Naive thymus-derived CD4-positive, alpha-beta T cell (primary cell): ENCODE measurements at regions of chr5 and their contacts with region 1.

Region 1: GRCh38 chr5:132064738-132065331 is 4.4 kb downstream of the IL3 start:
- DNase-seq: peak; percentile 40 to 82 (median 64)
- ATAC-seq: peak; percentile 80
- H3K4me3 ChIP-seq: no peak overlapping the region
- H3K4me3 Mint-ChIP-seq: no peak overlapping the region
- H3K27ac ChIP-seq: no peak overlapping the region
- H3K27ac Mint-ChIP-seq: peak overlapping the region in 2 of 9 donors; percentile 30 to 79
- H3K4me1 ChIP-seq: peaks cover 0 to 9% of the 10 kb centered on the region in 2 donors
- H3K4me1 Mint-ChIP-seq: peaks cover 0 to 62% (median 5%) of the 10 kb centered on the region in 7 donors
- H3K27me3 ChIP-seq: no peaks in the 10 kb centered on the region
- H3K27me3 Mint-ChIP-seq: peaks cover 0 to 7% (median 0%) of the 10 kb centered on the region in 5 donors

Region 2: GRCh38 chr5:131589510-131590348 is 475.1 kb before region 1 on chr5:
- CTCF ChIA-PET with region 1: interaction called, 23 read pairs
- POLR2A ChIA-PET with region 1: interaction called, 3 read pairs
- intact Hi-C with region 1: loop called (anchors 1 kb)
- DNase-seq: peak in 8 of 9 donors; percentile 8 to 71 (median 62)
- ATAC-seq: peak; percentile 80
- H3K4me3 ChIP-seq: no peak overlapping the region
- H3K4me3 Mint-ChIP-seq: no peak overlapping the region
- H3K27ac ChIP-seq: peak overlapping the region; percentile 9
- H3K27ac Mint-ChIP-seq: peak overlapping the region; percentile 10 to 75 (median 52)
- H3K4me1 ChIP-seq: peaks cover 4 to 5% of the 10 kb centered on the region in 2 donors
- H3K4me1 Mint-ChIP-seq: peaks cover 21 to 63% (median 58%) of the 10 kb centered on the region in 7 donors
- H3K27me3 ChIP-seq: no peaks in the 10 kb centered on the region
- H3K27me3 Mint-ChIP-seq: no peaks in the 10 kb centered on the region

Region 3: DNA sequence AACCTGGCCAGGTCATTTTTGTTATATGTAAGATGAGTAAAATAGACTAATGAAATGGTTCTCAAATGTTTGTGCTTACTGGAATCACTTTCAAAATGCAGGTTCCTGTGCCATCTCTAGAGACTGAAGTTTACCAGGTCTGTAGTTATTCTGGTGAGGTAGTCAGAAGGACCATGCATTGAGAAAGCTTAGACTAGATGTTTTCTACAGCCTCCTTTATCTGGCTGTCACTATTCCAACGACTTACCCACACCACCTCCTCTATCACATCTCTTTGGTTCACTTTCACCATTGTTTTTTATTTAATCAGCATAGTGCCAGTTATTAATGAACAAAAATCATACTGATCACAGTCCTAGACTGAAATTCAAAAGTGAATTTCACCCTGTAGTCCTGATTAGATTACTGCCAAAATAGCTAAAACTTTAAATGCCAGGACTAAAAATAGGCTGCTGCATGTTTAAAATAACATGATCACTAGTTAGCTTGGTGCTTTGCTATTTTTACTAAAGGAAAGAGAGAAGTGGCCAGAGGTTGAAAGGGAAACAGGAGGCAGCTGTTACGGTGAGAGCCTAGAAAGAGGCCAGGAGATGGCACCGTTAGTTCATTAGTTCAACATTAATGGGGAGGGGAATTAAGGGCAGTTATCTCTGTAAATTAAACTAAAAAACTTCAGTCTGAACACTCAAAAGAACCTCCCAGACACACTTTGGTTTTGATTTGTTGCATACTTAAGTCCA is 254.2 kb before region 1 on chr5:
- CTCF ChIA-PET with region 1: interaction called, 3 read pairs
- POLR2A ChIA-PET with region 1: no interaction called
- intact Hi-C with region 1: loop called (anchors 1 kb)
- DNase-seq: peak in 4 of 9 donors; percentile 21 to 25 (median 22)
- ATAC-seq: peak; percentile 52
- H3K4me3 ChIP-seq: no peak overlapping the region
- H3K4me3 Mint-ChIP-seq: no peak overlapping the region
- H3K27ac ChIP-seq: no peak overlapping the region
- H3K27ac Mint-ChIP-seq: no peak overlapping the region
- H3K4me1 ChIP-seq: no peaks in the 10 kb centered on the region
- H3K4me1 Mint-ChIP-seq: peaks cover 0 to 4% (median 0%) of the 10 kb centered on the region in 7 donors
- H3K27me3 ChIP-seq: no peaks in the 10 kb centered on the region
- H3K27me3 Mint-ChIP-seq: peaks cover 0 to 24% (median 0%) of the 10 kb centered on the region in 5 donors

Region 4: DNA sequence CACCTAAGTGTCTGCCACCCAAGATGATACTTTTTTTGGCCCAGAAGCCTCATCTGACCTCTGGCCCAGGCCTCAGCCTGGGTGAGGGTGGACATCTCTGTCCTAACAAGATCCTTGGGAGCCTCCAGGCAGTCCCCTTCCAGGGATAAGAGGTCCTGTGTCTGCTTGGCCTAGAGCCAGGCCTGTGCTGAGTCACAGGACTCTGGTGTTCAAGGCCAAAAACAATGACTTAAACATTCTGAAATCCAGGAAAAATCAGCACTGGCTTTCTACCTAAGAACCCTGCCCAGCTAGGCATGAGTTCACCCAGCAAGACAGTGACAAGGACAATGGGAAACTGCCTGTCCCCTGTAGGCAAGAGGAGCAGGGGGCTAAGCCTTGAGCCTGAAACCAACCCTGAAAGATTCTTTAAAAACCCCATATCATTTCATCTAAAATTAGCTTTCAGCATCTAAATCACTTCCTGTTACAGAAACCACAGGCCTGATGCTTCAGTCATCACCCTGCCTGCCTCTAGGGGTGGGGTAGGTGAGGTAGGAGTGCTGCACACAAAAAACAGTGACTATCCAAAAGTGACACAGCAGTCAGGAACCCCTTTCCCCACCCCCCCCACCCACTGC is 38.6 kb after region 1 on chr5:
- CTCF ChIA-PET with region 1: interaction called, 6 read pairs
- POLR2A ChIA-PET with region 1: no interaction called
- intact Hi-C with region 1: loop called (anchors 1 kb)
- DNase-seq: peak in 8 of 9 donors; percentile 49 to 82 (median 72)
- ATAC-seq: peak; percentile 92
- H3K4me3 ChIP-seq: peak overlapping the region; percentile 0
- H3K4me3 Mint-ChIP-seq: peak overlapping the region in 9 of 10 donors; percentile 16 to 74 (median 56)
- H3K27ac ChIP-seq: no peak overlapping the region
- H3K27ac Mint-ChIP-seq: peak overlapping the region in 8 of 9 donors; percentile 14 to 86 (median 64)
- H3K4me1 ChIP-seq: peaks cover 40 to 72% of the 10 kb centered on the region in 2 donors
- H3K4me1 Mint-ChIP-seq: peaks cover 42 to 86% (median 51%) of the 10 kb centered on the region in 7 donors
- H3K27me3 ChIP-seq: no peaks in the 10 kb centered on the region
- H3K27me3 Mint-ChIP-seq: no peaks in the 10 kb centered on the region

Region 5: GRCh38 chr5:132190161-132190817 is 125.5 kb after region 1 on chr5:
- CTCF ChIA-PET with region 1: no interaction called
- POLR2A ChIA-PET with region 1: no interaction called
- intact Hi-C with region 1: loop called in 1 of 2 experiments (anchors 2 kb)
- DNase-seq: peak in 7 of 9 donors; percentile 18 to 64 (median 44)
- ATAC-seq: peak; percentile 96
- H3K4me3 ChIP-seq: no peak overlapping the region
- H3K4me3 Mint-ChIP-seq: no peak overlapping the region
- H3K27ac ChIP-seq: no peak overlapping the region
- H3K27ac Mint-ChIP-seq: no peak overlapping the region
- H3K4me1 ChIP-seq: no peaks in the 10 kb centered on the region
- H3K4me1 Mint-ChIP-seq: peaks cover 0 to 4% (median 0%) of the 10 kb centered on the region in 7 donors
- H3K27me3 ChIP-seq: no peaks in the 10 kb centered on the region
- H3K27me3 Mint-ChIP-seq: peaks cover 0 to 19% (median 11%) of the 10 kb centered on the region in 5 donors

Region 6: GRCh38 chr5:132281855-132282614 is 217.2 kb after region 1 on chr5:
- CTCF ChIA-PET with region 1: no interaction called
- POLR2A ChIA-PET with region 1: no interaction called
- intact Hi-C with region 1: no loop called
- DNase-seq: no peak
- ATAC-seq: no peak
- H3K4me3 ChIP-seq: no peak overlapping the region
- H3K4me3 Mint-ChIP-seq: no peak overlapping the region
- H3K27ac ChIP-seq: no peak overlapping the region
- H3K27ac Mint-ChIP-seq: no peak overlapping the region
- H3K4me1 ChIP-seq: no peaks in the 10 kb centered on the region
- H3K4me1 Mint-ChIP-seq: no peaks in the 10 kb centered on the region
- H3K27me3 ChIP-seq: no peaks in the 10 kb centered on the region
- H3K27me3 Mint-ChIP-seq: peaks cover 0 to 10% (median 0%) of the 10 kb centered on the region in 5 donors

Region 7: GRCh38 chr5:132556763-132557477 is 492.1 kb after region 1 on chr5 and contains the start of gene RAD50:
- CTCF ChIA-PET with region 1: no interaction called
- POLR2A ChIA-PET with region 1: no interaction called
- intact Hi-C with region 1: no loop called
- DNase-seq: peak; percentile 81 to 92 (median 90)
- ATAC-seq: peak; percentile 97
- H3K4me3 ChIP-seq: peak within 1 kb of the TSS; percentile 78
- H3K4me3 Mint-ChIP-seq: peak within 1 kb of the TSS; percentile 90 to 99 (median 96)
- H3K27ac ChIP-seq: peak within 1 kb of the TSS; percentile 76
- H3K27ac Mint-ChIP-seq: peak within 1 kb of the TSS; percentile 90 to 98 (median 97)
- H3K4me1 ChIP-seq: peaks cover 5 to 14% of the 10 kb centered on the region in 2 donors
- H3K4me1 Mint-ChIP-seq: peaks cover 10 to 37% (median 29%) of the 10 kb centered on the region in 7 donors
- H3K27me3 ChIP-seq: no peaks in the 10 kb centered on the region
- H3K27me3 Mint-ChIP-seq: no peaks in the 10 kb centered on the region
- total RNA-seq, gene RAD50: 18.0 to 35.4 (median 32.2) TPM